Activated CD8-positive, alpha-beta T cell treated with anti-CD3 and anti-CD28 coated beads, Interleukin-2, amount 10 ng/mL, durations not matched to agents 7 days and 5 days (primary cell): ENCODE measurements at regions of chr7 and their contacts with region 1.

Region 1: DNA sequence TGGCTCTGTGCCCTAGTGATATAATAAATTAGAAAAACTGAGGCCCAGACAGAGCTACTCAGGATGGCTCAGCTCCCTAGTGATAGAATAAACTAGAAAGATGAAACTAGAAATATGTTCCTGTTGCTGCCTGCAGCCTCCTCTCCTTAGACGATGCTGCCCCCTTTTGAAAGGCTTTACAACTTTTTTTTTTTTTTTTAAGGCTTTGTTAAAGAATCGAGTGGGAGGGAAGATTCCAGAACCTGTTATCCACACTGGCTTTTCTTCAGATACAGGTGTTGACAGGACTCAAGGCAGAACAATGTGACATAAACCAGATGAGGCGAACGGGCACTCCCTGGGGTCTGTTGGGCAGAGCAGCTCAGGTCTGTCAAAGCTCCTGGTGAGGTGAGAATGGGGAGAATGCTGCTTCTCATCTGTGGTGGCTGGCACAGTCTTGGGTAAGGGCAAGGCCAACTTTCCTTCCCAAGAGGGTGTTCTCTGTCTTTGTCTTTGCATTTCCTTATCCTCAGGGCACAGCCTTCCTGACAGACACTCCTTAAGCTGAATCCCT is 175.1 kb downstream of the COBL start:
- DNase-seq: no peak
- ATAC-seq: no peak
- H3K4me3 Mint-ChIP-seq: no peak overlapping the region
- H3K27ac Mint-ChIP-seq: no peak overlapping the region
- H3K4me1 Mint-ChIP-seq: peaks cover 13% of the 10 kb centered on the region
- H3K27me3 Mint-ChIP-seq: peaks cover 5% of the 10 kb centered on the region

Region 2: DNA sequence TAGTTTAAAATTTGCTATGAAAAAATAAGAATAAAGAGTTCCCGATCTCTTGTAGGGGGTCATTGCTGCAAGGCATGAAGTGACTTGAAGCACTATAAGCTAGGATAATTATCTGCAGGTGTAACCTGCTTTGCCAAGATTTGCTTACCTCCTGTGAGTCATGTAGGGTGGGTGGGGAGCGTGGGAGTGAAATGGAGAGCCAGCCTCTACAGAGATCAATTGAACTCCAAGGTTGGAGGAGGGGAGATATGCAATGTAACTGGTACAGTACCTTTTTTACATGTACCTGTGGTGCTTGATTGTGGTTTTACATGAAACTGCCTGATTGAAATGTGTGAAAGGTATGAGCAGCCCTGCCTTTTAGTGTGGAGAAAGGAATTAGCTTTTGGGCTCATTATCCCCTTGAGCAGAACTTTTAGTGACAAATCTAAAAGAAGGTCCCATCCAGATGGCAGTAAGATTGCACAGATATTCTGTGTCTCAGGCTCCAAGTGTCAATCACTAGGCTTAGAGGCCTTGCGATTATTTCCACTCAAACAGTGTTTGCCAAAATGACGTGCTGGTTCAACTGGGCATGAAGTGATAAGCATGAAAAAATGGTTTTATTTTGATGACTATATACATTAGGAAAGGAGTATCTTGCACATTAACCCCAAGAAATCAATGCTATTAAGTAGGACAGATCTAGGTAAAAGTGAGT is 220.3 kb before region 1 on chr7:
- CTCF ChIA-PET with region 1: no interaction called
- POLR2A ChIA-PET with region 1: no interaction called
- DNase-seq: no peak
- ATAC-seq: no peak
- H3K4me3 Mint-ChIP-seq: no peak overlapping the region
- H3K27ac Mint-ChIP-seq: no peak overlapping the region
- H3K4me1 Mint-ChIP-seq: no peaks in the 10 kb centered on the region
- H3K27me3 Mint-ChIP-seq: no peaks in the 10 kb centered on the region

Region 3: DNA sequence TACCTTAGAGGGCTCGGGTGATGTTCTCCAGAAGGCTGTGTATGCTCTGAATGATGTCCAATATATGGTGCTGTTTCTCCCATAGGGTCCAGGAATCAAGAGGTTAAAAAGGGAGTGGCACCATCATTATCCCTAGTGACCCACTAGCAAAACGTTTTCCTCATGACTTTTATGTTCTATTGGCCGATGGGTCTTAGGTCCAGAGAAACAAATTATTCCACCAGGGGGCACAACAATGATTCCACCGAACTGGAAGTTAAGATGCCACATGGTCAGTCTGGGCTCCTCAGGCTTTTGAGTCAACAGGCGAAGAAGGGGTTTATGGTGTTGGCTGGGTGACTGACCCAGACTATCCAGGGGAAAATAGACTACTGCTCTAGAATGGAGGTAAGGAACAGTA is 81.0 kb before region 1 on chr7:
- CTCF ChIA-PET with region 1: interaction called, 12 read pairs
- POLR2A ChIA-PET with region 1: no interaction called
- DNase-seq: no peak
- ATAC-seq: no peak
- H3K4me3 Mint-ChIP-seq: no peak overlapping the region
- H3K27ac Mint-ChIP-seq: no peak overlapping the region
- H3K4me1 Mint-ChIP-seq: no peaks in the 10 kb centered on the region
- H3K27me3 Mint-ChIP-seq: no peaks in the 10 kb centered on the region

Region 4: GRCh38 chr7:51069411-51070083 is 72.0 kb before region 1 on chr7:
- CTCF ChIA-PET with region 1: interaction called, 20 read pairs
- POLR2A ChIA-PET with region 1: no interaction called
- DNase-seq: no peak
- ATAC-seq: no peak
- H3K4me3 Mint-ChIP-seq: no peak overlapping the region
- H3K27ac Mint-ChIP-seq: no peak overlapping the region
- H3K4me1 Mint-ChIP-seq: no peaks in the 10 kb centered on the region
- H3K27me3 Mint-ChIP-seq: no peaks in the 10 kb centered on the region

Region 5: GRCh38 chr7:51102828-51103227 is 38.7 kb before region 1 on chr7:
- CTCF ChIA-PET with region 1: no interaction called
- POLR2A ChIA-PET with region 1: no interaction called
- DNase-seq: no peak
- ATAC-seq: no peak
- H3K4me3 Mint-ChIP-seq: no peak overlapping the region
- H3K27ac Mint-ChIP-seq: no peak overlapping the region
- H3K4me1 Mint-ChIP-seq: no peaks in the 10 kb centered on the region
- H3K27me3 Mint-ChIP-seq: no peaks in the 10 kb centered on the region

Region 6: GRCh38 chr7:51123322-51124029 is 18.1 kb before region 1 on chr7:
- CTCF ChIA-PET with region 1: interaction called, 35 read pairs
- POLR2A ChIA-PET with region 1: interaction called, 3 read pairs
- DNase-seq: peak; percentile 41
- ATAC-seq: peak; percentile 44
- H3K4me3 Mint-ChIP-seq: no peak overlapping the region
- H3K27ac Mint-ChIP-seq: peak overlapping the region; percentile 37
- H3K4me1 Mint-ChIP-seq: peaks cover 27% of the 10 kb centered on the region
- H3K27me3 Mint-ChIP-seq: no peaks in the 10 kb centered on the region